Activated T-helper 1 cell treated with anti-CD3 and anti-CD28 coated beads, Interleukin-12 subunit alpha, Interleukin-12 subunit beta, Interleukin-2, Interleukin-4 antibody, amounts not matched to agents 30 ng/mL and 10 ng/mL and 1 ng/mL, durations not matched to agents 14 hours and 24 hours and 36 hours (primary cell): ENCODE measurements at regions of chr14 and their contacts with region 1.

Region 1: DNA sequence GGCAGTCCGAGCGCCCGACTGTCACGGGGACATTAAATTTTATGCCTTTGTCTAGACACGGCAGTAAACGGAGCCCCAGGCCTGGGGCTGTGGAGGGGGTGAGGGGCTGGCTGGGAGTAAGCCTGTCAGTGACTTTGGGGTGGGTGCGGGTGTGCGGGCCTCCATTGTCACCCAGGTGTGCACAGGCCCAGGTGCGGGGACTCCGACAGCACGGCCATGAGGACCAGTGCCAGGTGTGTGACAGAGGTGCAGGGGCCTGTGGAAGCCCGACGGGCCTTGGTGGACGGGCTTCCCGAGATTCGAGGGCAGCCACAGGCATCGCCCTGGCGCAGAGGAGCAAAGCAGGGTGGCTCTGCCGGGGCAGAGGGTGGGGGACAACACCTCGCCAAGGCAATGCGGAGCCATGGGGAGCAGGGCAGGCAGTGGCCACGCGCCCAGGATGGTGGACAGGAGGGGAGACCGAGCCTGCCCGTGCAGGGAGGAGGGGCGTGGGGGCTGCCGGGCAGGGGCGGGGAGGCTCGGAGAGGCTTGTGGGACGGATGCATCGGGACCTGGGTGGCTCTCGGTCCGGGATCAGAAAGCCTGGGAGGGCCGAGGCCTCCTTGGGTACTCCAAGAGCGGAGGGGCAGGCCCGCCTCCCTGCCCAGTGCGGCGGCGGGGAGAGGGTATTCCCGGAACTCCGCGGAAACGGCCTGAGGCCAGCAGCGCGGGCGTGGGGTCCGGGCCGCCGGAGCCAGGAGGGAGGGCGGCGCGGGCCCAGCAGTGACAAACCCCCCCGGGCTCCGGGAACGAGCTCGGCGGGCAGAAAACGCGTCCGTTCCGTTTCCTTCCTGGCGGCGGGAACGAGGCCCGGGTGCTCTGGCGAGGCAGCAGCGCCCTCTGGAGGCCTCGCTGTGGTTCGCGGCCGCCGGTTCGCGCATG is 1.5 kb downstream of the TMEM121 start:
- DNase-seq: peak; percentile 75
- H3K4me3 Mint-ChIP-seq: peak overlapping the region; percentile 77
- H3K27ac Mint-ChIP-seq: peak overlapping the region; percentile 71
- H3K4me1 Mint-ChIP-seq: no peaks in the 10 kb centered on the region
- H3K27me3 Mint-ChIP-seq: peaks cover 28% of the 10 kb centered on the region

Region 2: GRCh38 chr14:105203057-105203531 is 324.8 kb before region 1 on chr14:
- intact Hi-C with region 1: loop called (anchors 10 kb)
- DNase-seq: peak; percentile 55
- H3K4me3 Mint-ChIP-seq: no peak overlapping the region
- H3K27ac Mint-ChIP-seq: no peak overlapping the region
- H3K4me1 Mint-ChIP-seq: peaks cover 5% of the 10 kb centered on the region
- H3K27me3 Mint-ChIP-seq: no peaks in the 10 kb centered on the region

Region 3: DNA sequence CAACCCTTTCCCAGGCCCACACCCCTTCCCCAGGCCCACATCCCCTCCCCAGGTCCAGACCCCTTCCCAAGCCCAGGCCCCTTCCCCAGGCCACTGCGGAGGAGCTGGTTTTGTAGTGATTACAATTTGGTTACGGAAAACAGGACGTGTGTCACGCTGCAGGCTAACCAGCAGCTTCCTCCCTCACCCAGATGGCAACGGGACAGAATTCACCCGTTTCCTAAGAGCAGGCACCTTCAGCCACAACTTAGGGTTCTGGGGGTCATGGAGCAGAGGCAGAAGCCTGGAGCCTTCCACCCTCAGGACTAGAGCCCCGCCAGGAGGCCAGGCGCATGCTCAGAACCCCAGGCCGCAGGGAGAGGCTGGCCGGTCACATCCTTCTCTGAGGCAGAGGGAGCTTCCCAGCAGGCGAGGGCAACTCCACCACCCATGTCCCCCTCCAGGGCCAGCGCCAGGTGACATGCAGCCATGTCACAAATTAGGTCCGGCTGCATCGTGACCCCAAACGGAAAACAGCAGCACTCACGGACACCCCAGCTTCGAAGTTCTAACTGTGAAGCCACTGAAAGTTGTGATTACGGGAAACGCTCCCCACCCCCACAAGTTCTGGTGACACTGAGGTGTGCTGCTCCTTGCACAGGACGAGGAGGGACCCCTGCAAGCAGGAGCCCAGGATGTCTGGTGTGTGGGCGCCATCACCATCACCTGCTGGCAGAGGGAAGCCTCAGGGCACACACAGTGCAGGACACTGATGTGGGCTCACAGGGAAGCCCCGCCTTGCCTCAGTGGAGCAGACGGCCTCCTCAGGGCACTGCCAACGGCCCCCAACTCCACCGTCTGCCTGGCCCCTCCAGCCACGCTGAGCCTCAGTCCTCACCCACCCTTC is 234.9 kb before region 1 on chr14:
- intact Hi-C with region 1: no loop called
- DNase-seq: peak; percentile 40
- H3K4me3 Mint-ChIP-seq: peak overlapping the region; percentile 71
- H3K27ac Mint-ChIP-seq: peak overlapping the region; percentile 97
- H3K4me1 Mint-ChIP-seq: peaks cover 40% of the 10 kb centered on the region
- H3K27me3 Mint-ChIP-seq: no peaks in the 10 kb centered on the region

Region 4: GRCh38 chr14:105369653-105370040 is 158.3 kb before region 1 on chr14:
- intact Hi-C with region 1: loop called (anchors 1 kb)
- DNase-seq: no peak
- H3K4me3 Mint-ChIP-seq: no peak overlapping the region
- H3K27ac Mint-ChIP-seq: no peak overlapping the region
- H3K4me1 Mint-ChIP-seq: peaks cover 5% of the 10 kb centered on the region
- H3K27me3 Mint-ChIP-seq: no peaks in the 10 kb centered on the region

Region 5: GRCh38 chr14:105448706-105449111 is 79.2 kb before region 1 on chr14:
- intact Hi-C with region 1: loop called (anchors 1 kb)
- DNase-seq: peak; percentile 42
- H3K4me3 Mint-ChIP-seq: no peak overlapping the region
- H3K27ac Mint-ChIP-seq: no peak overlapping the region
- H3K4me1 Mint-ChIP-seq: no peaks in the 10 kb centered on the region
- H3K27me3 Mint-ChIP-seq: no peaks in the 10 kb centered on the region

Region 6: DNA sequence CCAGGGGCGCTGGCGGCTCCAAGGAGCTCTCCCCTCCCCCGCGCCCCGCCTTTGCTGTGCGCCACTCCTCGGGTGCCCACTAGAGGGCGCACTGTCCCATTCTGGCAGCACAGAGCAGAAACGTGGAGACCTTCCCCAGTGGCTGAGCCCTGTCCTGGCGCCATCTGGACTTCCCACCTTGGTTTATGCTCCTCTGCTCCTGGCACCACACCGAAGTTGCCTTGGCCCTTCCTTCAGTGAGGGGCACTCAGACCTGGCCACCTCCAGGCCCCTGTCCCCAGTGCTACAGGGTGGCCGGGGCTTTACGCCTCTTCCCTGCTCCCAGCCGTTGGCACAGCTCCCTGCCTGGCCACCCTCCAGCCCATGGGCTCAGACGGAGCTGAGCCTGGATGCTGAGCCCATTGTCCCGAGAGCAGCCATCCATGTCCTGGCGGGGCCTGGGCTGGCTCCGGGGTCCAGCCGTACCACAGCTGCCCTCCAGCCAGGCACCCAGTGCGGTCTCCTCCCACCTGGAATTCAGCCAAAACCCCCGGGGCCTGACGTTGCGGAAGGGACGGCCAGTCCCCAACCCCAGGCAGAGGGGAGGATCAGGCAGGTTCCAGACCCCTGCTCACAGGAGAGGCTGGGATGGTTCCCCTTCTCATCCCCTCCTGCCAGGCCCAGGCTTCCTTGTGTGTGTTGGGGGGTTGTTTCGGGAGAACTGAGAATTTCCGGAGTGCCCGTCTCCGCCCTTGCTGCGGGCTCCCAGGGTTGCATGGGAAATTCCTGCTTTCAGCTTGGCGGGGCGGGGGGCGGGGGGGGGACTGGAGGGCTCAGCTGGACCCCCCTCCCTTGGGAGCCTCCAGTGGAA is 46.7 kb before region 1 on chr14:
- intact Hi-C with region 1: loop called (anchors 2 kb)
- DNase-seq: peak; percentile 86
- H3K4me3 Mint-ChIP-seq: peak overlapping the region; percentile 65
- H3K27ac Mint-ChIP-seq: peak overlapping the region; percentile 98
- H3K4me1 Mint-ChIP-seq: peaks cover 30% of the 10 kb centered on the region
- H3K27me3 Mint-ChIP-seq: peaks cover 22% of the 10 kb centered on the region